Activated CD4-positive, alpha-beta memory T cell treated with anti-CD3 and anti-CD28 coated beads for 36 hours (primary cell): ENCODE measurements at regions of chr10 and their contacts with region 1.

Region 1: GRCh38 chr10:12782537-12782936 is 219.0 kb downstream of the CCDC3 start:
- DNase-seq: peak; percentile 58
- H3K4me3 Mint-ChIP-seq: no peak overlapping the region
- H3K27ac Mint-ChIP-seq: no peak overlapping the region
- H3K4me1 Mint-ChIP-seq: peaks cover 45% of the 10 kb centered on the region
- H3K27me3 Mint-ChIP-seq: no peaks in the 10 kb centered on the region

Region 2: GRCh38 chr10:12121673-12122072 is 660.9 kb before region 1 on chr10:
- CTCF ChIA-PET with region 1: interaction called, 3 read pairs
- POLR2A ChIA-PET with region 1: interaction called, 3 read pairs
- intact Hi-C with region 1: loop called (anchors 2 kb)
- DNase-seq: no peak
- H3K4me3 Mint-ChIP-seq: peak overlapping the region; percentile 64
- H3K27ac Mint-ChIP-seq: peak overlapping the region; percentile 97
- H3K4me1 Mint-ChIP-seq: peaks cover 33% of the 10 kb centered on the region
- H3K27me3 Mint-ChIP-seq: no peaks in the 10 kb centered on the region

Region 3: DNA sequence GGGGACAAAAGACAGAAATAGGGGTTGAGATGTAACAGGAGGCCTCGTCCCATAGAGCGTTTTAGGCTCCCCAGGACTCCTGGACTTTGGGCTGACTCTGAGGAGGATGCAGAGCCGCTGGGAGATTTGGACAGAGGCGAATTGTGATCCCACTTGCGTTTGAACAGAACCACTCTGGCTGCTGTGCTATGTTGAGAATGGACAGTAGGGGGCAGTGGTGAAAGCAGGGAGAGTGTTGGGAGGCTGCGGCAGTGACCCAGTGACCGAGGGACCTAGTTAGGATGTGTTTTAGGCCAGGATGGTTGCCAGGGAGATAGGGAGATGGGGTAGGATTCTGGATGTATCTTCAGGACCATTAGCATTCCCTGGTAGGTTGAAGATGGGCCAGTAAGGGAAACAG is 52.7 kb before region 1 on chr10:
- CTCF ChIA-PET with region 1: interaction called, 17 read pairs
- POLR2A ChIA-PET with region 1: interaction called, 5 read pairs
- intact Hi-C with region 1: loop called (anchors 1 kb)
- DNase-seq: peak; percentile 34
- H3K4me3 Mint-ChIP-seq: no peak overlapping the region
- H3K27ac Mint-ChIP-seq: no peak overlapping the region
- H3K4me1 Mint-ChIP-seq: peaks cover 21% of the 10 kb centered on the region
- H3K27me3 Mint-ChIP-seq: no peaks in the 10 kb centered on the region

Region 4: DNA sequence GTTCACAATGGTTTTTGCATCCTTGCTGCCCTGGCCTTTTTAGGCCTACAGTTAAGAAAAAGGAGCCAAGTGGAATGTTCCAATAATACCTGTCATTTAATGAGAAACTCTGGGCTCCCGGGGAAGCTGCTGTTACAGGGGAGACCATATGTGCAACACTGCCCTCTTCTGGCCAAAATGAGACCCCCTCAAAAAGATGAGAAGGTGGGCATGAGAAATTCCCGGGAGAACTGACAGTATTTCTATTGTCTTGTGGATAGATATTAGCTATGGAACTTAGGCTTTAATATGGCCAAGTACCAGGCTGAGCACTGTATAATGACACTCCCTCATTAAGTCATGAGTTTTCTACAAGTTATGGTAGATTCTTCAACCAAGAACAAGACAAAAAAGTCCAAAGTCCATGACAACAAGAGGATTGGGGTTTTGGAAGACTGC is 119.6 kb after region 1 on chr10:
- CTCF ChIA-PET with region 1: interaction called, 20 read pairs
- POLR2A ChIA-PET with region 1: no interaction called
- intact Hi-C with region 1: no loop called
- DNase-seq: peak; percentile 57
- H3K4me3 Mint-ChIP-seq: no peak overlapping the region
- H3K27ac Mint-ChIP-seq: no peak overlapping the region
- H3K4me1 Mint-ChIP-seq: no peaks in the 10 kb centered on the region
- H3K27me3 Mint-ChIP-seq: peaks cover 16% of the 10 kb centered on the region

Region 5: DNA sequence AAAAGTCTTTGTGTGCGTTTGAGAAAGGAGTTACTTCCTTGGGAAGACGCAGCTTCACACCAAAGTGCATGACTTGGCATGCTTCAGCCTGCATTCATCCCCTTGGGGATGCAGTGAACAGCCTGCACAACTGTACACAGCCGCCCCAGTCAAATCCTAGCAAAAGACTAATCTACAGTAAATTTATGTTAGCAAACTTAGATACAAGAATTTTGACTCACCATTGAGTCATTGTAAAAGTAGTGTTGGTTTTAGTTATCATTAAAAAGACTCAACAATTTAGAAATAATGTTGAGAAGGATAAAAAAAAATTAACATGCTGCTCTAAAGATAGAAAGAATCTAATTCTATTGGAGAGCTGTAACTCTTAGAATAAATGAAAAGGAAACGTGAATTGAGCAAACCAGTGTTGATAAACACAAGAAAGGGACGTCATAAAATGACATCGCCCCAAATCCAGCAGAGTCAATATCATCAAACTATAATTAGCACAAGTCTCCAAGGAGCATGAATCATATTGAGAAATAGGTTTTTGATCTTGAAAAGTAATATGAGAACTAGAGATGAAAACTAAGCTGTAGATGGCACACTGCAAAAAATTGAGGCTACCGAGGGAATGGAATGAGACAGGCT is 305.6 kb after region 1 on chr10:
- CTCF ChIA-PET with region 1: interaction called, 4 read pairs
- POLR2A ChIA-PET with region 1: no interaction called
- intact Hi-C with region 1: loop called (anchors 2 kb)
- DNase-seq: peak; percentile 39
- H3K4me3 Mint-ChIP-seq: no peak overlapping the region
- H3K27ac Mint-ChIP-seq: peak overlapping the region; percentile 15
- H3K4me1 Mint-ChIP-seq: peaks cover 14% of the 10 kb centered on the region
- H3K27me3 Mint-ChIP-seq: peaks cover 6% of the 10 kb centered on the region